ENCODE measurements at regions of chr2 and their contacts with region 1.

Region 1: GRCh38 chr2:223465793-223466192 is 136.4 kb downstream of the SCG2 start:
- DNase-seq: peak; percentile 99
- H3K4me3 Mint-ChIP-seq: no peak overlapping the region
- H3K27ac Mint-ChIP-seq: peak overlapping the region; percentile 50
- H3K4me1 Mint-ChIP-seq: peaks cover 36% of the 10 kb centered on the region
- H3K27me3 Mint-ChIP-seq: no peaks in the 10 kb centered on the region
- CTCF ChIP-seq: no peak

Region 2: GRCh38 chr2:223549215-223549614 is 83.4 kb after region 1 on chr2:
- CTCF ChIA-PET with region 1: no interaction called
- POLR2A ChIA-PET with region 1: no interaction called
- intact Hi-C with region 1: loop called (anchors 5 kb)
- DNase-seq: peak; percentile 96
- H3K4me3 Mint-ChIP-seq: no peak overlapping the region
- H3K27ac Mint-ChIP-seq: peak overlapping the region; percentile 26
- H3K4me1 Mint-ChIP-seq: peaks cover 24% of the 10 kb centered on the region
- H3K27me3 Mint-ChIP-seq: no peaks in the 10 kb centered on the region
- CTCF ChIP-seq: no peak

Region 3: DNA sequence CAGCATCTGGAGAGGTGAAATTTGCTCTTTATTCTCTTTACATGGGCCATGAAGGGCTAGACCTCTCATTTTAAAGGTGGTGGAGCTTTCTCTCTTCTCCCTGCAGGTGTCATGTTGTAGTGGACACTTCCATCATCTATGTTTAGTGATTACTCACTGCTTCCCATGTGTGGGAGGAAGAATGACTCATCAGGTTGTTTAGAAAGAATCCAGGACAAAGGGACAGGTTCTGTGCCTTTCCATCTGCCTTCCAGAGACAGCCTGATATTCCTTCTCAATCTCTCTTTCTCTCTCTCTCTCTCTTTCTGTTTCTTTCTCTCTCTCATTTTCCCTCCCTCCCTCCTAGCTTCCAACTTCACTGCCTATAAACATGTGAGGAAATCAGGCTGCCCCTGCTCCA is 97.7 kb after region 1 on chr2:
- CTCF ChIA-PET with region 1: interaction called, 3 read pairs
- POLR2A ChIA-PET with region 1: no interaction called
- intact Hi-C with region 1: loop called (anchors 1 kb)
- DNase-seq: peak; percentile 92
- H3K4me3 Mint-ChIP-seq: no peak overlapping the region
- H3K27ac Mint-ChIP-seq: peak overlapping the region; percentile 33
- H3K4me1 Mint-ChIP-seq: peaks cover 19% of the 10 kb centered on the region
- H3K27me3 Mint-ChIP-seq: no peaks in the 10 kb centered on the region
- CTCF ChIP-seq: no peak

Region 4: DNA sequence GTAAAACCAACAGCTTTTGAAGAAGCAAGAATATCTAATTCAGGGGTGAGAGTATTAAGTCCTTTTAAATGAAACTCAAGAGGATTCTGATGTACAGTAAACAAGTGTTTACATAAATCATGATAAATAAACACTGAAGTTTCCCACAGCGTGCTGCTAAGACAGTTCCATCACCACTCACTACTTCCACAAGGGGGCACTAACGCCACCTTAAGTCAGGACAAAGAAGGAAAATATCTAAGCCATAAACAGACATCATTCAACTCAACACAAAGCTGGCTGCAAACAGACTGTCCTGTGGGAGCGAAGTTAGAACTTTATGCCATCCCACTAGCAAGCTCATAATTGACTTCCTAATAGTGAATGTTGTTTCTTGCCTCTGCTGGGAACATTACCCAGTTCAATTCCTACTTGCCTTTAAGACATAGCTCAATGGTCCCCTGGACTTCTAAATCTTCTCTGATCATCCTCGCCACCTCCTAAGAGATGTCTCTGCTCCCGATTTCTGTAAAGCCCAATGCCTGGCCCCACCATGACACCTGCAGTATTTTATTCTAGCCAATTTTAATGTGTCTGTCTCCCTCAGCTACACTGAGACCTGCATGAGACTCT is 527.9 kb after region 1 on chr2:
- CTCF ChIA-PET with region 1: no interaction called
- POLR2A ChIA-PET with region 1: no interaction called
- intact Hi-C with region 1: no loop called
- DNase-seq: peak; percentile 81
- H3K4me3 Mint-ChIP-seq: no peak overlapping the region
- H3K27ac Mint-ChIP-seq: peak overlapping the region; percentile 9
- H3K4me1 Mint-ChIP-seq: peaks cover 11% of the 10 kb centered on the region
- H3K27me3 Mint-ChIP-seq: no peaks in the 10 kb centered on the region
- CTCF ChIP-seq: peak; percentile 73

Measured in MCF 10A (cell line).